ENCODE measurements at regions of chr10 and their contacts with region 1.

Region 1: DNA sequence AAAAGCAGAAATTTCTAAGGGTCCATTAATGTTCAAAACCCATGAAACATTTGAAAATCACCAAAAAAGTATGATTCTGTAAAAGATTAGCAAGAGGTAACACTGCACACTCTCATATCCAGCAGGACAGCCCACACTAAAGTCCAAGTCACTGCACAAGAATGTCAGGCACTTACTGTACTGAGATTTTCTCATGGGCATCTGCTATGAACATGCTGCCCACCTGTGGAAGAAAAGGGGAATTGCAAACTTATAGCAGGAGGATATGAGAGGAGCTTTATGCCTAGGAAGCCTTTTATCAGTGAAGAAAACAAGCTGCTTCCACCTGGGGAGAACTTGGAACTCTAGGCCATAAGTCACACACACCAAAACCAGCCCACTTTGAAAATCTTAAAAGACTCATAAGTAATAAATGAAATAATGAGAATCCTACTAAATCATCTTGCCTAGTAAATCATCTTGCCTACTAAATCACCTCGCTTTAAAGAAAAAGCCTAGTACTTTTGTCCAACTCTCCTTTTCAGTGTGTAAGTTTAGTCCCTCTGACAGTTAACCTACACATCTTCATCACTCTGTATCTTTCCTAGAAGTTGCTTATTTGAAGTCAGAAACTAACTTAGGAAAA is 46.1 kb downstream of the ARMH3 start:
- DNase-seq: peak; percentile 83
- H3K4me3 ChIP-seq: no peak overlapping the region
- H3K27ac ChIP-seq: no peak overlapping the region
- H3K4me1 ChIP-seq: no peaks in the 10 kb centered on the region
- H3K27me3 ChIP-seq: no peaks in the 10 kb centered on the region
- CTCF ChIP-seq: peak; percentile 85 to 94
- POLR2A ChIP-seq: no peak

Region 2: DNA sequence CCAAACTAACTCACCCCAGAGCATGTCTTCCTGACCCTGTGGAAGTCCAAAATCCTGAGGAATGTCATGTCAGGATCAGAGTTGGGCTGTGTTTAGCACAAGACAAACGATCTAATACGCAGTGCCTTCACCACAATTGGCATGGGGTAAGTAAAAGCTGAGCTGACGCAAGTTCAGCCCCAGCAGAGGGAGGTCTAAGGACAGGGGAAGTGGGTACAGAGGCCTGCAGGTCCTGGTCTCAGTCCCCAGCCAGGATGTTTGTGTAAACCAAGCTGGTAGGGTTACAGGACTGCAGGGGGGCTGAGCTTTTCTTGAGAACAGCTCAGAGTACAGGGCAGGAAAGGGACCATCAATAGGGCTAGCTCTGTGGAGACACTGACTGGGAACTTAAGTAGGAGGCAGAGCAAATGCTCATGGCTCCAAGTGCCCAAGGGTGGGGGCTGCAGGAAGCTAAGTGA is 161.0 kb before region 1 on chr10:
- CTCF ChIA-PET with region 1: interaction called, 37 read pairs
- POLR2A ChIA-PET with region 1: no interaction called
- dilution Hi-C with region 1: no loop called
- intact Hi-C with region 1: no loop called
- DNase-seq: no peak
- H3K4me3 ChIP-seq: no peak overlapping the region
- H3K27ac ChIP-seq: peak overlapping the region; percentile 71
- H3K4me1 ChIP-seq: peaks cover 26% of the 10 kb centered on the region
- H3K27me3 ChIP-seq: no peaks in the 10 kb centered on the region
- CTCF ChIP-seq: no peak
- POLR2A ChIP-seq: no peak

Region 3: GRCh38 chr10:101879456-101880231 is 130.3 kb before region 1 on chr10:
- CTCF ChIA-PET with region 1: interaction called, 559 read pairs
- POLR2A ChIA-PET with region 1: interaction called, 4 read pairs
- dilution Hi-C with region 1: no loop called
- intact Hi-C with region 1: no loop called
- DNase-seq: no peak
- H3K4me3 ChIP-seq: no peak overlapping the region
- H3K27ac ChIP-seq: no peak overlapping the region
- H3K4me1 ChIP-seq: no peaks in the 10 kb centered on the region
- H3K27me3 ChIP-seq: no peaks in the 10 kb centered on the region
- CTCF ChIP-seq: no peak
- POLR2A ChIP-seq: no peak

Region 4: DNA sequence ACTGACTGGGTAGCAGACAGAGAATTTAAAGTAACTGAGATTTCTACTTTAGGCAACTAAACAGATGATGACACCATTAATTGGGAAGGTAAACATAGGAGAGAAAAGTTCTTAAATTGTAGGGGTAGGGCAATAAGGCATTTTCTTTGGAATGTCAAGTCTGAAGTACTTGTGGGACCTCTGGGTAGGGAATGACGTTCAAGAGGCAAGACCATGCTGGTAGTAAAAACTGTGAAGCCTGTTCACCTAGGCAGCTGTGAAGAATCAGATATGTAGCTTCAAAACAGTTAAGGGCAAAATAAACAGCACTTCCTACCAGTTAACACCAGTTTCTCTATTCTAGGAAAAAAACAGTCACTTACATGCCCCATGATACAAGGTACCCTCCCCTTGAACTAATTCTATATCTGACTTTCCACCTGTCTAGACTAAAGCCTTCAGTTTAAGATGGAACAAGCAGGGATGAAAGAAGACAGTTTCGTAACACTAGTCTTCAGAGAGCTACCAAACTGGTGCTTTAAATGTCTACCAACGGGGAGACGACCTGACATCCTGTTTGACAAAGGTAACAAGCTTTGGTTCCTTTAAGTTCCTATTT is 103.2 kb before region 1 on chr10:
- CTCF ChIA-PET with region 1: interaction called, 17 read pairs
- POLR2A ChIA-PET with region 1: no interaction called
- dilution Hi-C with region 1: no loop called
- intact Hi-C with region 1: no loop called
- DNase-seq: no peak
- H3K4me3 ChIP-seq: no peak overlapping the region
- H3K27ac ChIP-seq: no peak overlapping the region
- H3K4me1 ChIP-seq: no peaks in the 10 kb centered on the region
- H3K27me3 ChIP-seq: no peaks in the 10 kb centered on the region
- CTCF ChIP-seq: no peak
- POLR2A ChIP-seq: no peak

Region 5: GRCh38 chr10:101938316-101939281 is 71.3 kb before region 1 on chr10:
- CTCF ChIA-PET with region 1: interaction called, 57 read pairs
- POLR2A ChIA-PET with region 1: no interaction called
- dilution Hi-C with region 1: no loop called
- intact Hi-C with region 1: no loop called
- DNase-seq: peak; percentile 97
- H3K4me3 ChIP-seq: no peak overlapping the region
- H3K27ac ChIP-seq: peak overlapping the region; percentile 92
- H3K4me1 ChIP-seq: peaks cover 49% of the 10 kb centered on the region
- H3K27me3 ChIP-seq: no peaks in the 10 kb centered on the region
- CTCF ChIP-seq: no peak
- POLR2A ChIP-seq: peak; percentile 53

Region 6: GRCh38 chr10:101995451-101996063 is 14.4 kb before region 1 on chr10:
- CTCF ChIA-PET with region 1: interaction called, 83 read pairs
- POLR2A ChIA-PET with region 1: no interaction called
- dilution Hi-C with region 1: no loop called
- intact Hi-C with region 1: no loop called
- DNase-seq: peak; percentile 52
- H3K4me3 ChIP-seq: no peak overlapping the region
- H3K27ac ChIP-seq: no peak overlapping the region
- H3K4me1 ChIP-seq: peaks cover 11% of the 10 kb centered on the region
- H3K27me3 ChIP-seq: no peaks in the 10 kb centered on the region
- CTCF ChIP-seq: no peak
- POLR2A ChIP-seq: no peak

Region 7: DNA sequence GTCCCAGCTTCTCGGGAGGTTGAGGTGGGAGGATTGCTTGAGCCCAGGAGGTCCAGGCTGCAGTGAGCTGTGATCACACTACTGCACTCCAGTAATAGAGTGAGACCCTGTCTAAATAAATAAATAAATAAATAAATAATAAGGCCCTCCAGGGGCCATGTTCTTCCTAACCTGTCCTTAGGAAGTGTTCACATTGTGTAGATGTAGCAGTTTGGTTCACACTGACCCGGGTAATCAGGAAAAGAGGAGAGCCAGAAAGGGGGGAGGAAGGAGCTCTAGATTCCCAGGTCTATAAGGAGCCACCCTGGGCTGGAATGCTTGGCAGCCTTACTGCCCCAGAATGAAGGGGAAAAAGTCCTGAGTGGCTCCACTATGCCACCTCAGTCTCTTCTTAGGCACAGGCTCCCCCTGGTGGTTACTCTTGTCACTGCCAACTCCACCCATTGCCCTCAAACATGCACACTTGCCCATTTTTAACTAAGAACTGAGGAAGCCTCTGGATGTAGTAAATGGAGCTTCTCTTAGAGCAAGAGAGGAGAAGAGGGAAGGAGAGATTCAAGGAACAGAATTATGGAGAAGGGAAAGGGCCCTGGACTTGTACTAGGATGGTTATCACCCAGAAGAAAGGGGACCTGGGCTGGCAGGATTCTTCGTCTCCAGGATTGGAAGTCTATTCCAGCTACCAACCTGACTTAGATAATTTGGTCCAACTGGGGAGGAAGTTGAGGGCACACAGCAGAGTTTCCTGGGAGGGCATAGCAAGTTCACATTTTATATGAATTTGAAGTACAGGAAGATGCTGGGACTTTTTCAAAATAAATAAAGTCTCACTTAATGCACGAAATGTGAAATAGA is 63.0 kb after region 1 on chr10:
- CTCF ChIA-PET with region 1: interaction called, 43 read pairs
- POLR2A ChIA-PET with region 1: no interaction called
- dilution Hi-C with region 1: no loop called
- intact Hi-C with region 1: loop called (anchors 1 kb)
- DNase-seq: peak; percentile 81
- H3K4me3 ChIP-seq: no peak overlapping the region
- H3K27ac ChIP-seq: no peak overlapping the region
- H3K4me1 ChIP-seq: no peaks in the 10 kb centered on the region
- H3K27me3 ChIP-seq: peaks cover 0 to 2% of the 10 kb centered on the region in 2 experiments
- CTCF ChIP-seq: peak; percentile 91 to 98
- POLR2A ChIP-seq: no peak